B cell (primary cell): ENCODE measurements at regions of chr18 and their contacts with region 1.

Region 1: DNA sequence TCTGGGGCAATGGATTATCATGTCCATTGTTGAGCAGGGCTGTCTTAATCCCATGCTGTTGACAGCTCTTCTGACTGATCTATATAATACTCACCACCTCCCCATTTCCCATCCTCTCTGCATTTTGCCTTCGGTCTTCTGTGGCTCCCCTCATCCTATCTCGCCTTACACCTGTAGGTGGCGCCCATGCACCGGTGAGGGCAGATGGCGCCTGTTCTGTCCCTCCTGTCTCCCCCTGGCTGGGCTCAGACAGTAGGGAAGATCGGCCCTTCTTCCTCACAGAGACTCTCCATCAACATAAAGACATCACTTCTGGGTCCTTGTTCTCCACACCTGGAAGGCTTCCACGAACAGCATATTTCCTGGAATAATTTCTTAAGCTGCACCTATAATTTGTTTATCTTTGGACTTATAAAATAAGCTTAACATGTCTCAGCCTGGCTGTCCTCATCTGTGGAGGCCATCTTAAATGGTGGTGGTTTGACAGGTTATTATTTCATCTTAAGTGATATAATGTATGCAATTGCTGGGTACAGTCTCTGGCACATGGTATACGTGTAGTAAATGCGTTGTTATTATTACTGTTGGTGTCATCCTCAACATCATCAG is 10.9 kb upstream of the CDH20 start:
- DNase-seq: peak; percentile 57
- ATAC-seq: no peak
- H3K4me3 ChIP-seq: no peak overlapping the region
- H3K4me3 Mint-ChIP-seq: no peak overlapping the region
- H3K27ac ChIP-seq: no peak overlapping the region
- H3K27ac Mint-ChIP-seq: no peak overlapping the region
- H3K4me1 ChIP-seq: no peaks in the 10 kb centered on the region
- H3K4me1 Mint-ChIP-seq: no peaks in the 10 kb centered on the region
- H3K27me3 ChIP-seq: peaks cover 0 to 2% (median 0%) of the 10 kb centered on the region in 4 experiments
- H3K27me3 Mint-ChIP-seq: peaks cover 4% of the 10 kb centered on the region
- CTCF ChIP-seq: peak; percentile 70

Region 2: DNA sequence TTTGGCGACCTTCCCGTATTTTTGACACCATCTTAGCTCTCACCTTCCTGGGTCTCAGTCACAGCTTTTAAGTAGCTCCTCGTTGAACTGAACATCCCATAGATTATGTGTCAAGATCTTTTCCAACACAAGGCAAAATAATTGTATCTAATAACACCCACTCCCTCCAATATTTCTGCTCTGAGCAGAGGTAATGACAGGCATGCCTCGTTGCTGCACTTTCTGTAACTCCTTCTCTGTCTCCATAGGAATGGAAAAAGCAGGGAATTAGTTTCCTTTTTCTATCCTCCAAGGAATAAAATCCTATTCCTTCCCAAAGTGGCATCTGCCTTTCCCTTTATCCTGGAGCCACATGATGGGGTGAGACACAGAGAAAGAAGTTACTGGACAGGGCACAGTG is 163.1 kb before region 1 on chr18:
- CTCF ChIA-PET with region 1: no interaction called
- POLR2A ChIA-PET with region 1: no interaction called
- intact Hi-C with region 1: no loop called
- DNase-seq: no peak
- ATAC-seq: no peak
- H3K4me3 ChIP-seq: no peak overlapping the region
- H3K4me3 Mint-ChIP-seq: no peak overlapping the region
- H3K27ac ChIP-seq: no peak overlapping the region
- H3K27ac Mint-ChIP-seq: no peak overlapping the region
- H3K4me1 ChIP-seq: no peaks in the 10 kb centered on the region
- H3K4me1 Mint-ChIP-seq: no peaks in the 10 kb centered on the region
- H3K27me3 ChIP-seq: no peaks in the 10 kb centered on the region
- H3K27me3 Mint-ChIP-seq: no peaks in the 10 kb centered on the region
- CTCF ChIP-seq: no peak

Region 3: DNA sequence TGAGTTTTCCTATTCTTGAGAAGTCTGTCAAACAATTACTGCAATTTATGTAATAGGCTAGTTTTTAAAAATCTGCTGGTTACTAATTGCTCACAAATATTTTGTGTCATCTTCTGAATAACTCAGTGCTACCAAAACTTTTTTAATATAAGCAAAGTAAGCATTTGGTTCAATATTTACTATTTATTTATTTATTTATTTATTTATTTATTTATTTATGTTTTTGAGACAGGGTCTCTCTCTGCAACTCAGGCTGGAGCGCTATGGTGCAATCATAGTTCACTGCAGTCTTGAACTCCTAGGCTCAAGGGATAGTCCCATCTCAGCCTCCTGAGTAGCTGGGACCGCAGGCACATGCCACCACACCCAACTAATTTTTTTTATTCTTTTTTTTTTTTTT is 49.6 kb before region 1 on chr18:
- CTCF ChIA-PET with region 1: no interaction called
- POLR2A ChIA-PET with region 1: no interaction called
- intact Hi-C with region 1: no loop called
- DNase-seq: no peak
- ATAC-seq: no peak
- H3K4me3 ChIP-seq: no peak overlapping the region
- H3K4me3 Mint-ChIP-seq: no peak overlapping the region
- H3K27ac ChIP-seq: no peak overlapping the region
- H3K27ac Mint-ChIP-seq: no peak overlapping the region
- H3K4me1 ChIP-seq: no peaks in the 10 kb centered on the region
- H3K4me1 Mint-ChIP-seq: no peaks in the 10 kb centered on the region
- H3K27me3 ChIP-seq: no peaks in the 10 kb centered on the region
- H3K27me3 Mint-ChIP-seq: no peaks in the 10 kb centered on the region
- CTCF ChIP-seq: no peak

Region 4: GRCh38 chr18:61308795-61309393 is 13.5 kb before region 1 on chr18:
- CTCF ChIA-PET with region 1: no interaction called
- POLR2A ChIA-PET with region 1: no interaction called
- intact Hi-C with region 1: no loop called
- DNase-seq: no peak
- ATAC-seq: no peak
- H3K4me3 ChIP-seq: no peak overlapping the region
- H3K4me3 Mint-ChIP-seq: no peak overlapping the region
- H3K27ac ChIP-seq: no peak overlapping the region
- H3K27ac Mint-ChIP-seq: no peak overlapping the region
- H3K4me1 ChIP-seq: no peaks in the 10 kb centered on the region
- H3K4me1 Mint-ChIP-seq: no peaks in the 10 kb centered on the region
- H3K27me3 ChIP-seq: no peaks in the 10 kb centered on the region
- H3K27me3 Mint-ChIP-seq: no peaks in the 10 kb centered on the region
- CTCF ChIP-seq: no peak

Region 5: GRCh38 chr18:61502472-61502871 is 180.1 kb after region 1 on chr18:
- CTCF ChIA-PET with region 1: interaction called, 87 read pairs
- POLR2A ChIA-PET with region 1: no interaction called
- intact Hi-C with region 1: no loop called
- DNase-seq: peak; percentile 33
- ATAC-seq: no peak
- H3K4me3 ChIP-seq: no peak overlapping the region
- H3K4me3 Mint-ChIP-seq: no peak overlapping the region
- H3K27ac ChIP-seq: no peak overlapping the region
- H3K27ac Mint-ChIP-seq: no peak overlapping the region
- H3K4me1 ChIP-seq: no peaks in the 10 kb centered on the region
- H3K4me1 Mint-ChIP-seq: no peaks in the 10 kb centered on the region
- H3K27me3 ChIP-seq: peaks cover 0 to 2% (median 0%) of the 10 kb centered on the region in 4 experiments
- H3K27me3 Mint-ChIP-seq: peaks cover 12% of the 10 kb centered on the region
- CTCF ChIP-seq: peak; percentile 62

Region 6: DNA sequence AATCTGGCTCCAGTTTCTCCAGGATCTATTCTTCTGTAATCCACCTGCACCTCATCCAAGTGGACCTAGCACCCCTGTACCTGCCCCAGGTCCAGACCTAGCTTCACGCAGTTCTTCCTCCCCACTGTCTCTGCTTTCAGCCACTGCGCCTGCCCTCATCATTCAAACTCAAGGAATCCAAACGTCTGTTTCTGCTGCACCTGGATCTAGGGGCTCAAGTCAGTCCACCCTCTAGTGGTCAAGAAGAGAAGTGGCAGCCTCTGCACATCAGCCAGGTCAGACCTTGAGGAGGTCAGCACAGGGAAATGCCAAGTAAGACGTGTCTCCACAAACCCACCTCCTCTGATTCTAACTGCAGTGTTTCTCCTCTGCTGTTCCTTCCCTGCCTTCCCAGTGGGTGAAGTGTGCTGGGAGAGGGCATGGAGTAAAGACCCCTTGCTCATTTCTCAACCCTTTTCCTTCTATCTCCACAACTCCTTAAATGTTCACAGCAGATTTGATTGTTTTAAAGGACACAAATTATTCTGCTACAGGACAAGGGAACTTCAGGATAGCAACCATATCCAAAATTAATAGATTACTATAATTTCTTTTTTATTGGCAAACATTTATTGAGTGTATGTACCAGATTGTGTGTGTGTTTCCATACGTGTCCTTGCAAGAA is 579.1 kb after region 1 on chr18:
- CTCF ChIA-PET with region 1: no interaction called
- POLR2A ChIA-PET with region 1: no interaction called
- intact Hi-C with region 1: loop called (anchors 5 kb)
- DNase-seq: peak; percentile 53
- ATAC-seq: peak; percentile 76
- H3K4me3 ChIP-seq: no peak overlapping the region
- H3K4me3 Mint-ChIP-seq: no peak overlapping the region
- H3K27ac ChIP-seq: no peak overlapping the region
- H3K27ac Mint-ChIP-seq: no peak overlapping the region
- H3K4me1 ChIP-seq: no peaks in the 10 kb centered on the region
- H3K4me1 Mint-ChIP-seq: no peaks in the 10 kb centered on the region
- H3K27me3 ChIP-seq: peaks cover 0 to 22% (median 9%) of the 10 kb centered on the region in 4 experiments
- H3K27me3 Mint-ChIP-seq: peaks cover 49% of the 10 kb centered on the region
- CTCF ChIP-seq: peak; percentile 88